A549 (cell line): ENCODE measurements at regions of chr20 and their contacts with region 1.

Region 1: GRCh38 chr20:9978397-9979004 is 56.3 kb upstream of the ANKEF1 start:
- DNase-seq: peak; percentile 63 to 94
- ATAC-seq: peak; percentile 94 to 95
- H3K4me3 ChIP-seq: no peak overlapping the region; the same call in 2 of the 3 replicates
- H3K27ac ChIP-seq: peak overlapping the region; percentile 33 to 74
- H3K4me1 ChIP-seq: peaks cover 21% of the 10 kb centered on the region; the same call in 2 of the 3 replicates
- CTCF ChIP-seq: peak; percentile 100
- EP300 ChIP-seq: peak in 1 of 2 experiments; percentile 31; a peak in 1 of 5 replicates
- POLR2A ChIP-seq: no peak
- RAD21 ChIP-seq: peak; percentile 100

Region 2: DNA sequence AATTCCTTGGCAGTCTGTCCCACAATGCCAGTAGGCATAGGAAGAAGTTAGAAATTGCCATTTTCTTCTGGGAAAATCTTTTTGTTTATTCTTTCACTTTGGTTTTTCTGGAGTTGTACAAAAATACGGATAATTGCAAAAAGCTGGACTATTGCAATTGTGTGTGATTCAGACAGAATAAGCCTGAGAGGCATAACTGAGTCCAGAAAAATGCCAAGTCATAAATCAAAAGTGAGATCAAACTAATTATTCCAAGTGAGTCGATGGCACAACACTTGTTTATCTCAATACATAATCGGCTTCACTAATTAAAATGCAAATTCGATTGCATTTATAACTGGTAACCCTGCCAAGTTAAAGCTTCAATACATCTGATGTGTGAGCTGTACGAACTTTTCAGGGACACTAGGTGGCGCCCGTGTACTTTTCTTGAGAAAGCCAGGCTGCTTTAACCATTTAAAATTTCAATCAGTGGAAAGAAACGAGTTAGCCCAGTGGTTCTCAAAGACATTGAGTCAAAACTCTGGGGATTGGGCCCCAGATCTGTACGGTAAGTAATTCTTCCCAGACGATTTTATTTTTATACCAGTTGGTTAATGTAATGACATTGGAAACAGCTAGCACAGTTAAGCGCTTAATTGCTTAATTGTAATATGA is 361.5 kb before region 1 on chr20:
- CTCF ChIA-PET with region 1: interaction called, 60 read pairs
- POLR2A ChIA-PET with region 1: interaction called, 3 read pairs
- DNase-seq: peak; percentile 65 to 80
- ATAC-seq: peak; percentile 79 to 87
- H3K4me3 ChIP-seq: peak overlapping the region; percentile 39
- H3K27ac ChIP-seq: peak overlapping the region in 1 of 2 experiments; percentile 71; a peak in 4 of 6 replicates
- H3K4me1 ChIP-seq: no peaks in the 10 kb centered on the region
- CTCF ChIP-seq: peak; percentile 98
- EP300 ChIP-seq: no peak
- POLR2A ChIP-seq: no peak
- RAD21 ChIP-seq: peak; percentile 97

Region 3: GRCh38 chr20:9829835-9830234 is 148.7 kb before region 1 on chr20:
- CTCF ChIA-PET with region 1: no interaction called
- POLR2A ChIA-PET with region 1: no interaction called
- DNase-seq: no peak
- ATAC-seq: no peak
- H3K4me3 ChIP-seq: no peak overlapping the region
- H3K27ac ChIP-seq: no peak overlapping the region
- H3K4me1 ChIP-seq: no peaks in the 10 kb centered on the region
- CTCF ChIP-seq: no peak
- EP300 ChIP-seq: no peak
- POLR2A ChIP-seq: no peak
- RAD21 ChIP-seq: no peak

Region 4: DNA sequence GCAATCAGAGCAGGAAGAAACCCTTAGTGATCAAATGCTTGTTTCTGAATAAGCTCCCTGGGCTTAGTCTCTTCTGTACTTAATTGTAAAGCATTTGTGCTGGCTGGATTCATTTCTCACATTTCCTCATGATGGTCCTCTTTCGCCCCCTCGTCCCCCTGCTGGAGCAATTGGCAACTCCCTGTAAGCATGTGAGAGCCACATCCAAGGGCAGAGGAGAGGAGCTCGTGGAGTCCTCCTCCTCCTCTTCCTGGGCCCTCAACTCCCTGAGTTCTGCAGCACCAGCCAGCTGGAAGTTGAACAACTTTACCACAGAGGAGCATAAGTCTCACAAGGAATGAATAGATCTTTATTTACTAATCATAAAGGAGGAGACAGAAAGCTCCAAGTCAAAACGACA is 68.9 kb after region 1 on chr20:
- CTCF ChIA-PET with region 1: interaction called, 13 read pairs
- POLR2A ChIA-PET with region 1: no interaction called
- DNase-seq: peak; percentile 42 to 53
- ATAC-seq: peak; percentile 94 to 97
- H3K4me3 ChIP-seq: no peak overlapping the region
- H3K27ac ChIP-seq: peak overlapping the region in 1 of 2 experiments; percentile 9; a peak in 1 of 6 replicates
- H3K4me1 ChIP-seq: no peaks in the 10 kb centered on the region
- CTCF ChIP-seq: peak; percentile 32; the same call in 2 of the 3 replicates
- EP300 ChIP-seq: no peak
- POLR2A ChIP-seq: no peak
- RAD21 ChIP-seq: peak; percentile 25 to 28; a peak in 1 of 5 replicates

Region 5: DNA sequence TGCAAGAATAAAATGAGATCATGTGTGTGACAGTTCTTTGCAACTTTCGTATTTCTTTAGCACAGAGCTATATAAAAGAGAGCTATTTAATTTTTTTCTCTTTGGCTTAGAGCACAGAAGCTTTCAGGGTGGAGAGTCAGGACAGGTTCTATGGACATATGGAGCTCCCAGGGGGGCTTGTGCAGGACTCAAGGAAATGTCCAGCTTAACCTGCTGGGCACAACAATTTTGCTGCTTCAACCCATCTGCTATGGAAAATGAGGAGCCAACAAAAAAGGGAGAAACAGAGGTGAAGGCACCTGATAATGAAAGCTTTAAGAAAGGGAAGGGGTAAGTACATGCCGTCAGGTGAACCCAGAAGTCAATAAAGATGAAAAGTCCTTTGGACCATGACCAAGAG is 235.0 kb after region 1 on chr20:
- CTCF ChIA-PET with region 1: interaction called, 11 read pairs
- POLR2A ChIA-PET with region 1: interaction called, 5 read pairs
- DNase-seq: no peak
- ATAC-seq: no peak
- H3K4me3 ChIP-seq: no peak overlapping the region
- H3K27ac ChIP-seq: no peak overlapping the region; a peak in 1 of 6 replicates
- H3K4me1 ChIP-seq: peaks cover 20% of the 10 kb centered on the region
- CTCF ChIP-seq: no peak
- EP300 ChIP-seq: no peak
- POLR2A ChIP-seq: no peak
- RAD21 ChIP-seq: no peak

Region 6: DNA sequence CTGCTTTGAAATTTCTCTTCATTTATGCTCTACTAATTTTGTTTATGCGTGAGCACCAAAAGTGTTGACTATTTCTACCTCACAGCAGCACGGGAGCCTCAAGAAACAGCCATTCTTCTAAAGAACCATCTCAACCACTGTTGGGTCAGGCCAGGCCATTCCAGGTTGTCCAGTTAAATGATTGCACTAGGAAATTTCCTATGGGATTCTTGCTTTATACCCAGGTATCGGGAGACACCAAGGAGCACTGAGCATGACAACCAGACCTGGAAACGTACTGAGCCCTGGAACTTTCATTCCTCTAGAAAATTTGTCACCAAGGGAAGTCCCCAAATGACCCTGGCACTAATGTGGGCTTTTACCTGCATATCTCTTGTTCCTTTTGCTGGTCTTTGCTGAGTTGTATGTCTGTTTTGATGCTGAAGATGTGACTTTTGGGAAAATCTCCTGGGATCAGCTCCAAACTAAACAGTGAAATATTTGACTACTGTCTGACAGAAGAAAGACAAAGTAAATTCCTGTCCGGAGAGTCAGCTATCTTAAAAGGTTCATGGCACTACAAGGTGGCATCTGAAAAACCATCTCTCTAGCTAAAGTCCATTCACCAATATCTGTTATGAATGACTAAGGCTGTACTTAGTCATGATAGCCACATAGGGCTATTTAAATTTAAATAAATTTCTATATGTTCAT is 310.6 kb after region 1 on chr20:
- CTCF ChIA-PET with region 1: interaction called, 18 read pairs
- POLR2A ChIA-PET with region 1: no interaction called
- DNase-seq: peak in 1 of 2 experiments; percentile 89
- ATAC-seq: peak; percentile 90 to 94
- H3K4me3 ChIP-seq: no peak overlapping the region
- H3K27ac ChIP-seq: peak overlapping the region; percentile 86 to 90
- H3K4me1 ChIP-seq: peaks cover 48% of the 10 kb centered on the region
- CTCF ChIP-seq: no peak
- EP300 ChIP-seq: peak; percentile 97
- POLR2A ChIP-seq: no peak
- RAD21 ChIP-seq: peak; percentile 42 to 67

Region 7: GRCh38 chr20:10453241-10453640 is 474.7 kb after region 1 on chr20:
- CTCF ChIA-PET with region 1: interaction called, 15 read pairs
- POLR2A ChIA-PET with region 1: no interaction called
- DNase-seq: no peak
- ATAC-seq: peak in 1 of 2 experiments; percentile 52; a peak in 3 of 6 replicates
- H3K4me3 ChIP-seq: no peak overlapping the region
- H3K27ac ChIP-seq: peak overlapping the region in 1 of 2 experiments; percentile 63; a peak in 3 of 6 replicates
- H3K4me1 ChIP-seq: peaks cover 35% of the 10 kb centered on the region
- CTCF ChIP-seq: no peak
- EP300 ChIP-seq: no peak
- POLR2A ChIP-seq: no peak
- RAD21 ChIP-seq: no peak

Region 8: GRCh38 chr20:10636326-10636818 is 657.9 kb after region 1 on chr20:
- CTCF ChIA-PET with region 1: interaction called, 19 read pairs
- POLR2A ChIA-PET with region 1: no interaction called
- DNase-seq: no peak
- ATAC-seq: peak; percentile 4 to 7; a peak in 2 of 6 replicates
- H3K4me3 ChIP-seq: no peak overlapping the region
- H3K27ac ChIP-seq: peak overlapping the region in 1 of 2 experiments; percentile 18; a peak in 3 of 6 replicates
- H3K4me1 ChIP-seq: peaks cover 52% of the 10 kb centered on the region
- CTCF ChIP-seq: no peak
- EP300 ChIP-seq: no peak
- POLR2A ChIP-seq: no peak
- RAD21 ChIP-seq: peak in 1 of 2 experiments; percentile 22; a peak in 1 of 5 replicates